CD8-positive, alpha-beta T cell (primary cell): ENCODE measurements at regions of chr16 and their contacts with region 1.

Region 1: DNA sequence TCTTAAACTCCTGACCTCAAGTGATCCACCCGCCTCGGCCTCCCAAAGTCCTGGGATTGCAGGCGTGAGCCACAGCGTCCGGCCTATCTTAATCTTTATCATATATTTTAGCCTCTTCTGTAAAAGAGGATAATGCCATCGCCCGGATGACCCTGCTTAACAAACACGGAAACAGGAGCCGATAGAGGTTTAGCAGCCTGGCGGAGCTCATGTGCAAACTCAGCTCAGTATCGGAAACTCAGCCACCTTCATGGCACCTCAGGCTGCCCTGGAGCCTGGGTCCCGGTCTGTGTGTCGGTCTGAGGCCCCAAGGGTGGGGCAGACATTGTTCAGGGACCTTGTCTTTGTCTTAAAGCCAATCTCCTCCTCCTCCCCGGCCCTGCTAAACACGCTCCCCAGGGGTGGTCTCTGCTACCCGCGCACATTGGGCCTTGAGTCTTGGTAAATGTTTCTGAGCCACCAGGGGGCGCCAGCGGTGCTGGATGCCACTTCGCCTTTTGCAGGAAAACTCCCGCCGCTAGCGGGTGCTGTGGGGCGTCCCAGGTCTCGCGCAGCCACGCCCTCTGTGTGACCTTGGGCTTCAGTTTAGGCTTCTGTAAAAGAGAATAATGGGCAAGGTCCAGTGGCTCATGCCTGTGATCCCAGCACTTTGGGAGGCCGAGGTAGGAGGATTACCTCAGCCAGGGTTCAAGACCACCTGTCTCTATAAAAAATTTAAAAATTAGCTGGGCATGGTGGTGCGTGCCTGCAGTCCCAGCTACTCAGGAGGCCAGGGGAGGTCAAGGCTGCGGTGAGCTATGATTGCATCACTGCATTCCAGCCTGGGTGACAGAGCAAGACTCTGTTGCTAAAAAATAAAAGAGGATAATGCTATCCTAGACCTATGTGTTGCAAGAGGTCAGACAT is 2.7 kb downstream of the CETP start:
- DNase-seq: peak; percentile 91 to 99 (median 95)
- ATAC-seq: peak; percentile 96
- H3K4me3 ChIP-seq: no peak overlapping the region
- H3K4me3 Mint-ChIP-seq: no peak overlapping the region
- H3K27ac ChIP-seq: no peak overlapping the region
- H3K27ac Mint-ChIP-seq: peak overlapping the region; percentile 84
- H3K4me1 ChIP-seq: peaks cover 21% of the 10 kb centered on the region
- H3K4me1 Mint-ChIP-seq: peaks cover 23% of the 10 kb centered on the region
- H3K27me3 ChIP-seq: no peaks in the 10 kb centered on the region
- H3K27me3 Mint-ChIP-seq: no peaks in the 10 kb centered on the region
- CTCF ChIP-seq: peak; percentile 99

Region 2: DNA sequence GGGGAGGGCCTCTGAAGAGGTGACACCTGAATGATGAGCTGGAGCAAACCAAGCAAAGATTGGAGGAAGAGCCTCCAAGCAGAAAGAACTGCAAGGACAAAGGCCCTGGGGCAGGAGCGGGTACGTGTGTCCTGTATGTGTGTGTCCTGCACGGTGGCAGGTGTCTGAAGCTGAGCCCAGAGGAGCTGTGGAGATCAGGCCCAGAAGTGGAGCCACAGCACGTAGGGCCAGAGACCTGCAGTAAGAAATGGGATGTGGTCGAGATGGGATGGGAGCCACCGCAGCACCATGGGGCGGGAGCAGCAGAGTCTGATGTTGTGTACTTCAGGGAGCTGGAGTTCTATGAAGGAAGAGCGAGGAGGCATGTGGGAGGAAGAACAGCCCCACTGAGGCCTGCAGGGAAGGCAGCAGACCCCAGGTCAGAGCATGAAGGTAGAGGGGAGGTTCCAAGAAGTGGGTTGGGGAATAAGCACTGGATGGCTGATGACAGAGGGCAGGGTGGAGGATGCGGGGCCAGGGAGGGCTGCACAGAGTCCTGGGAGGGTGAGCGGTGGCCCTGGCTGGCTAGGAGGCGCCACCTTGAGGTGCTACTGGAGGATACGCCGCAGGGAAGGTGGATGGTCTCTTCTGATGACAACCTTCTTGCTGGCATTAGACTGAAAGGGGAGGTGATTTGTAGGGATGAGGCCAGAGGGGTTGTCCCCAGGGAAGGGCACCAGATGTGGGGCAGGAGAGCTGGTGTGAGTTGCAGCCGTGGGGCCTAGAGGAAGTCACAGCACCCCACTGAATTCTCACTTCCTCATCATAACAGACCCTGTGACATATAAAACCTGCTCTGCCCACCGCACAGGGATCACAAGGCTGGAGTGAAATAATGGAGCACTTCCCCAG is 13.4 kb before region 1 on chr16:
- CTCF ChIA-PET with region 1: interaction called, 28 read pairs
- POLR2A ChIA-PET with region 1: no interaction called
- intact Hi-C with region 1: no loop called
- DNase-seq: peak in 8 of 9 experiments; percentile 43 to 72 (median 56)
- ATAC-seq: peak; percentile 94
- H3K4me3 ChIP-seq: no peak overlapping the region
- H3K4me3 Mint-ChIP-seq: no peak overlapping the region
- H3K27ac ChIP-seq: no peak overlapping the region
- H3K27ac Mint-ChIP-seq: no peak overlapping the region
- H3K4me1 ChIP-seq: no peaks in the 10 kb centered on the region
- H3K4me1 Mint-ChIP-seq: peaks cover 12% of the 10 kb centered on the region
- H3K27me3 ChIP-seq: no peaks in the 10 kb centered on the region
- H3K27me3 Mint-ChIP-seq: no peaks in the 10 kb centered on the region
- CTCF ChIP-seq: peak; percentile 61

Region 3: DNA sequence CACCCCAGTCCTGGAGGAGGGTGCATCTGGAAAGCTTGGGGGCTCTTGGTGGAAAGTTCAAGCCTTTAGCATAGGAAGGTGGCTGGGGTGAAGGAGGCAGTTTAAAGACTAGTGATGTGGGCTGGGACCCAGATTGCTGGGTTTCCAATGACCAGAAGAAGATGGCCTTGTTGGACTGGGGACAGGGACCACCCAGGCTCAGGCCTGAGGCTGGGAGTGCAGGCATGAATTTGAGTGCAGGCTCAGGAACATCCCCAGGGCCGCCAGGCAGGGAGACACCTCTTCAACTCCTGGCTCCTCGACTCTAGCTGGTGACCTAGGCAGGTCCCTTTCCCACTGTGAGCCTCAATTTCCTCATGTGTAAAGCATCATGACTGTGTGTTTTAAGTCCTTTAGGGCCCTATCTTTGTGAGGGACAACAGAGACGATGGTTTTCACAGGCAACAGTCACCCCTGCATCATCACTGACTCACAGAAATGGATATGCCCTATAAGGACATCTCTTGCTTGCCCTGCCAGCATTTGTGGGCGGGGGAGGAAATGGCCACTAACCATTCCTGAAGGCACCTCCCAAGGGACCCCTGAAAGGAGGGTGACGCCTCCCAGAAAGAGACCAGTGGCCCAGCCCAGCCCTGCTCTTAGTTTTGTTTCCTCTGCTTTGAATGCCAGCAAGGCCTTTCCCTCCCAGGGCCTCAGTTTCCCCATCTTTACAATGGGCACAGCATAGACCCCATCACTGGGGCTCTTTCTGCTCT is 36.0 kb after region 1 on chr16:
- CTCF ChIA-PET with region 1: interaction called, 24 read pairs
- POLR2A ChIA-PET with region 1: interaction called, 4 read pairs
- intact Hi-C with region 1: no loop called
- DNase-seq: peak in 4 of 9 experiments; percentile 61 to 69 (median 65)
- ATAC-seq: peak; percentile 65
- H3K4me3 ChIP-seq: peak overlapping the region; percentile 18 to 26
- H3K4me3 Mint-ChIP-seq: peak overlapping the region; percentile 71
- H3K27ac ChIP-seq: peak overlapping the region; percentile 58 to 90
- H3K27ac Mint-ChIP-seq: peak overlapping the region; percentile 96
- H3K4me1 ChIP-seq: peaks cover 90% of the 10 kb centered on the region
- H3K4me1 Mint-ChIP-seq: peaks cover 96% of the 10 kb centered on the region
- H3K27me3 ChIP-seq: no peaks in the 10 kb centered on the region
- H3K27me3 Mint-ChIP-seq: no peaks in the 10 kb centered on the region
- CTCF ChIP-seq: no peak

Region 4: DNA sequence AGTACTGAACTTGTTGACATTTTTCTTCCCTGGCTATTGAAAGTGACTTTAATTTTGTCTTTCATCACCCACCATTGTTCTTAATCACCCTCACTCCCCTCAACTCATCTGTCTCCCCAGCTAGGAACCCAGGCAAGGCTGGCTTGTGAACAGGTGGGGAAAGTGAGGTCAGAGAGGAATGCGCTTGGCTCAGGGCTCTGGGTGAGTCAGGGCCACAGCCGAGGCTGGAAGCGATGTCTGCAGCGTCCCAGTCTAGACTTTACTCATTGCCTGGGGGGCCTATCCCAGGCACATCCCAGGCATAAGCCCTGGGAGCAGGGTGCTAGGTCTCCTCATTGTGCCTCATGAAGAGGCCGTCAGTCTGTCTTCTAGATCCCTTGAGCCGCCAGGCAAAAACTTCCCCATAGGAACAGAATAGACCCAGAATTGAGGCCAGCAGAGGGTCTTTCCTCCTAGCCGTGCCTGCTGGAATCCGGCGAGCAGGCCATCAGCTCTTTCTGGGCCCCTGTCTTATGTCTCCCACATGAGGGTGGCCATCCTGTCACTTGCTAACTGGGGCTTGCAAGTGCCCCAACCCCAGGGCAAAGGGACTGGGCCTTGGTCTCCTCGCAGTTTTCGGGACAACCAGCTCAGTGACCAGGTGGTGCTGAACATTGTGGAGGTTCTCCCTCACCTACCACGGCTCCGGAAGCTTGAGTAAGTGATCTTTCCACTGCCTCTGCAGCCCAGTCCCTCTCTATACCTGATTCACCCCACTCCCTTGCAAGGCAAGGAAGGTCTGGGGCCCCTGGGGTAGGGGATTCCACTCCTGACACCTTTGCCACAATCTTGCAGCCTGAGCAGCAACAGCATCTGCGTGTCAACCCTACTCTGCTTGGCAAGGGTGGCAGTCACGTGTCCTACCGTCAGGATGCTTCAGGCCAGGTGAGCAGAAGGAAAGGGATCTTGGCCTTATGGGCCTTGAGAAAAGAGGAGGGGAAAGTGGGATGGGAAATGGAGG is 65.0 kb after region 1 on chr16:
- CTCF ChIA-PET with region 1: interaction called, 22 read pairs
- POLR2A ChIA-PET with region 1: interaction called, 3 read pairs
- intact Hi-C with region 1: no loop called
- DNase-seq: peak in 4 of 9 experiments; percentile 30 to 83 (median 72)
- ATAC-seq: peak; percentile 73
- H3K4me3 ChIP-seq: no peak overlapping the region
- H3K4me3 Mint-ChIP-seq: no peak overlapping the region
- H3K27ac ChIP-seq: peak overlapping the region in 1 of 2 experiments; percentile 50
- H3K27ac Mint-ChIP-seq: peak overlapping the region; percentile 84
- H3K4me1 ChIP-seq: peaks cover 78% of the 10 kb centered on the region
- H3K4me1 Mint-ChIP-seq: peaks cover 90% of the 10 kb centered on the region
- H3K27me3 ChIP-seq: no peaks in the 10 kb centered on the region
- H3K27me3 Mint-ChIP-seq: no peaks in the 10 kb centered on the region
- CTCF ChIP-seq: no peak

Region 5: GRCh38 chr16:57051696-57052228 is 87.3 kb after region 1 on chr16:
- CTCF ChIA-PET with region 1: interaction called, 92 read pairs
- POLR2A ChIA-PET with region 1: interaction called, 9 read pairs
- intact Hi-C with region 1: loop called in 1 of 2 experiments (anchors 1 kb)
- DNase-seq: no peak
- ATAC-seq: no peak
- H3K4me3 ChIP-seq: no peak overlapping the region
- H3K4me3 Mint-ChIP-seq: no peak overlapping the region
- H3K27ac ChIP-seq: no peak overlapping the region
- H3K27ac Mint-ChIP-seq: no peak overlapping the region
- H3K4me1 ChIP-seq: no peaks in the 10 kb centered on the region
- H3K4me1 Mint-ChIP-seq: peaks cover 19% of the 10 kb centered on the region
- H3K27me3 ChIP-seq: no peaks in the 10 kb centered on the region
- H3K27me3 Mint-ChIP-seq: no peaks in the 10 kb centered on the region
- CTCF ChIP-seq: no peak

Region 6: GRCh38 chr16:57084257-57084770 is 119.8 kb after region 1 on chr16:
- CTCF ChIA-PET with region 1: interaction called, 79 read pairs
- POLR2A ChIA-PET with region 1: interaction called, 3 read pairs
- intact Hi-C with region 1: loop called in 1 of 2 experiments (anchors 1 kb)
- DNase-seq: peak; percentile 58 to 92 (median 80)
- ATAC-seq: peak; percentile 98
- H3K4me3 ChIP-seq: no peak overlapping the region
- H3K4me3 Mint-ChIP-seq: no peak overlapping the region
- H3K27ac ChIP-seq: peak overlapping the region; percentile 59 to 69
- H3K27ac Mint-ChIP-seq: peak overlapping the region; percentile 92
- H3K4me1 ChIP-seq: peaks cover 11% of the 10 kb centered on the region
- H3K4me1 Mint-ChIP-seq: peaks cover 14% of the 10 kb centered on the region
- H3K27me3 ChIP-seq: no peaks in the 10 kb centered on the region
- H3K27me3 Mint-ChIP-seq: no peaks in the 10 kb centered on the region
- CTCF ChIP-seq: peak; percentile 96